ENCODE measurements at regions of chr20 and their contacts with region 1.

Region 1: GRCh38 chr20:15364781-15365180 is 1027.4 kb upstream of the FLRT3 start:
- DNase-seq: no peak
- ATAC-seq: no peak

Region 2: DNA sequence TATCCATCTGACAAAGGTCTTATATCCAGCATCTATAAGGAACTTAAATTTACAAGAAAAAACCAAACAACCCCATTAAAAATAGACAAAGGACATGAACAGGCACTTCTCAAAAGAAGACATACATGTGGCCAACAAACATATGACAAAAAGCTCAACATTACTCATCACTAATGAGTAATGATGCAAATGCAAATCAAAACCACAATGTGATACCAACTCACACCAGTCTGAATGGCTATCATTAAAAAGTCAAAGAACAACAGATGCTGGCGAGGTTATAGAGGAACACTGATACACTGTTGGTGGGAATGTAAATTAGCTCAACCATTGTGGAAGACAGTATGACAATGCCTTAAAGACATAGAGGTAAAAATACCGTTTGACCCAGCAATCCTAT is 1355.6 kb before region 1 on chr20:
- intact Hi-C with region 1: loop called (anchors 5 kb)
- DNase-seq: no peak
- ATAC-seq: no peak

Measured in sciatic nerve (tissue), 2 donors.